Ovary (tissue), 10 donors: ENCODE measurements at regions of chr1 and their contacts with region 1.

Region 1: GRCh38 chr1:61444288-61444687 is 280.7 kb downstream of the TM2D1 start:
- DNase-seq: no peak
- H3K4me3 ChIP-seq: no peak overlapping the region
- H3K27ac ChIP-seq: no peak overlapping the region
- H3K4me1 ChIP-seq: peaks cover 2% of the 10 kb centered on the region
- H3K27me3 ChIP-seq: no peaks in the 10 kb centered on the region
- CTCF ChIP-seq: no peak
- EP300 ChIP-seq: no peak
- POLR2A ChIP-seq: no peak

Region 2: DNA sequence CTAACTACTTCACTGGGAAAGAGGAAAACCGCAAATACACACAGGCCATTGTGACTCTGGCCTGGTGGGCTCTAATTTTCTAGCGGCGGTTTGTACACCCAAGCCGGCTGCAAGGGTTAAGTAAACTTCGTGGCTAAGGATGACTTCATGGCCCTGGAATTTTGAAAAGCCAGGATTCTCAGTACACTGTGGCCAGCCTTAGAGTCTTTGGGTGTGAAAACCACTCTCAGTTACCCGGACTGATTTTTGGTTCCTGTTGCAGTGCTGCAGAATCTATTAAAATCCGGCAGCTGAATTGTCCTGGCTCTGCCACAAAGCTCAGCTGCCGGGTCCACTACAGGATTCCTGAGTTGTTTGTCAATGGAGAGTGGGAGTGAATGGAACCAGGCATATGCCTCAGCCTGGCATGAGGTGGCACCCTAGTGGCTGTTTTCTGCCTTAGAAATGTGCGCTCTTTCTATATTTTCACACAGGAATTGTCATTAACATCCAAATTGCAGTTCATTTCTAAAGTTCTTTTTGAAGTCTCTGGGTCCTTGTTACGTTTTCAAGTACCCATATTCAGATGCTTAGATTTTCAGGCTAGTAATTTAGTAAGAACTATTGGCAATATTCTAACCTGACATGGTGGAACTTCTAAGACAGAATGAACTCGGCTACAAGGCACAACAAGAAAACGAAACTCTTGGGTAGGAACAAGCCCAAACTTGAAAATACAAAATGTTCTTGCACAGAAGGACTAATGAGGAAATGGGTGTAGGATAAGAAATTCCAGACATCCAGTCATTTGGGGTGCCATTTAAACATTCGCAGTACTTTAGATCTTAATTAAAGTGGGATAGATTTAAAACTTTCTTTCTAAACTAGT is 106.1 kb before region 1 on chr1:
- intact Hi-C with region 1: loop called in 2 of 4 experiments (anchors 2 to 10 kb)
- DNase-seq: peak; percentile 49 to 60 (median 59)
- H3K4me3 ChIP-seq: no peak overlapping the region
- H3K27ac ChIP-seq: peak overlapping the region; percentile 21 to 60
- H3K4me1 ChIP-seq: peaks cover 11% of the 10 kb centered on the region
- H3K27me3 ChIP-seq: no peaks in the 10 kb centered on the region
- CTCF ChIP-seq: peak in 2 of 3 donors; percentile 21 to 57
- EP300 ChIP-seq: no peak
- POLR2A ChIP-seq: no peak

Region 3: DNA sequence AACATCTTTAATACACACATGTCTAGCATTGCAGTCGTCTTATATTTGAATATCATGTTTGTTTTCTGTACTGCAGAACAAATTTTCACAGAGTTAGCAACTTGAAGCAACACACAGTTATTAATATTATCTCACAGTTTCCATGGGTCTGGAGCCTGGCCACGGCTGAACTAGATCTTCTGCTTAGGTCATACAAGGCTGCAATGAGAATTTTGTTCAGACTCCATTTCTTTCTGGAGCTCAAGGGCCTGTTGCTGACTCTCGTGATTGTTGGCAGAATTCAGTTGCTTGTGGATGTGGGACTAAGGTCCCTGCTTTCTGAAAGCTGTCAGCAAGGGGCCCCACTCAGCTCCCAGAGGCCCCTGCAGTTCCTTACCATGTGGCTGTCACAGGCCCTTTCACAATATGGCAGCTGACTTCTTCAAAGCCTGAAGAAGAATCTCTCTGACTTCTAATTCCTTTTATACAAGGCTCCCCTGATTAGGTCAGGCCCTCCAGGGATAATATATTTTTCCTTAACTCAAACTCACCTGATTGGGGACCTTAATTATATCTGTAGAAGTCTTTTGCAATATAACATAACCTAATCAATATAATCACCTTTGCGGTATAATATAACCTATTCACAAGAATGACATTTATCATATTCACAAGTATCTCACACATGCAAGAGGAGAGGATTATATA is 65.7 kb before region 1 on chr1:
- intact Hi-C with region 1: no loop called
- DNase-seq: no peak
- H3K4me3 ChIP-seq: no peak overlapping the region
- H3K27ac ChIP-seq: no peak overlapping the region
- H3K4me1 ChIP-seq: no peaks in the 10 kb centered on the region
- H3K27me3 ChIP-seq: no peaks in the 10 kb centered on the region
- CTCF ChIP-seq: no peak
- EP300 ChIP-seq: no peak
- POLR2A ChIP-seq: no peak

Region 4: DNA sequence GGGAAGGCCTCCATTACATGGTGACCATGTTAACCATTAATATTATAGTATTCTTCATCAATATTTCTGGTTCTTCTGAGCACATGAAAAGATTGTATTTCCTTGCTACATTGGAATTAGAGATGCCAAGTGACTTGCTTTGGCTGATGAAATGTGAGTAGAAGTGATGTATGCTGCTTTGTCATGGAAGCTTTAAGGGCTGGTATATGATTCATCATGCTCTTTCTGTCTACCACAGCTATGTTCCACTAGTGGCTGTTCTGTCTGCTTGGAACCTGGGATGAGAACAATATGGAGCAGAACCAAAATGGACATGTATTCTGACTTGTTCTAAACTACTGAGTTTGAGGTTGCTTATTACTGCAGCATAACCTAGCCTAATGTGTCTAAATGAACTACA is 117.4 kb after region 1 on chr1:
- intact Hi-C with region 1: no loop called
- DNase-seq: no peak
- H3K4me3 ChIP-seq: no peak overlapping the region
- H3K27ac ChIP-seq: no peak overlapping the region
- H3K4me1 ChIP-seq: no peaks in the 10 kb centered on the region
- H3K27me3 ChIP-seq: no peaks in the 10 kb centered on the region
- CTCF ChIP-seq: no peak
- EP300 ChIP-seq: no peak
- POLR2A ChIP-seq: no peak

Region 5: DNA sequence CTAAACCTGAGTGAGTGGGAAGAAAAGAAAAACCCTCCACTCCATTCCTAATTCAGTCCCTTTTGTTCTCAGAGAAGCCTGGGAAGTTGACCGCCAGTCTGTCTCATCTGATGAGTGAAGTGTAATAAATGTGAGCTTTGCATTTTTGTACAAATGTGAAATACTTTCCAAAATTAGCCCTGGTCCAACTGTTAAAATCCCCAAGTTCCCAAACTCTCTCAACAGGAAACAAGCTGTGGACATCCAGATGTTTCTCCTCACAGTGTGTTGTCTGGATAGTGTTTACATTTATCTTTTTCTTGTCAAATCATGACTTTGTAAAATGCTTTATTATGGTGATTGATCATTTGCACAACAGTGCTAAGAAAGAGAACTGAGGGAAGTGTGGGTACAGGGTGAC is 135.5 kb after region 1 on chr1:
- intact Hi-C with region 1: no loop called
- DNase-seq: no peak
- H3K4me3 ChIP-seq: no peak overlapping the region
- H3K27ac ChIP-seq: no peak overlapping the region
- H3K4me1 ChIP-seq: no peaks in the 10 kb centered on the region
- H3K27me3 ChIP-seq: no peaks in the 10 kb centered on the region
- CTCF ChIP-seq: no peak
- EP300 ChIP-seq: no peak
- POLR2A ChIP-seq: no peak